Uterus (tissue), 4 donors: ENCODE measurements at regions of chr15 and their contacts with region 1.

Region 1: DNA sequence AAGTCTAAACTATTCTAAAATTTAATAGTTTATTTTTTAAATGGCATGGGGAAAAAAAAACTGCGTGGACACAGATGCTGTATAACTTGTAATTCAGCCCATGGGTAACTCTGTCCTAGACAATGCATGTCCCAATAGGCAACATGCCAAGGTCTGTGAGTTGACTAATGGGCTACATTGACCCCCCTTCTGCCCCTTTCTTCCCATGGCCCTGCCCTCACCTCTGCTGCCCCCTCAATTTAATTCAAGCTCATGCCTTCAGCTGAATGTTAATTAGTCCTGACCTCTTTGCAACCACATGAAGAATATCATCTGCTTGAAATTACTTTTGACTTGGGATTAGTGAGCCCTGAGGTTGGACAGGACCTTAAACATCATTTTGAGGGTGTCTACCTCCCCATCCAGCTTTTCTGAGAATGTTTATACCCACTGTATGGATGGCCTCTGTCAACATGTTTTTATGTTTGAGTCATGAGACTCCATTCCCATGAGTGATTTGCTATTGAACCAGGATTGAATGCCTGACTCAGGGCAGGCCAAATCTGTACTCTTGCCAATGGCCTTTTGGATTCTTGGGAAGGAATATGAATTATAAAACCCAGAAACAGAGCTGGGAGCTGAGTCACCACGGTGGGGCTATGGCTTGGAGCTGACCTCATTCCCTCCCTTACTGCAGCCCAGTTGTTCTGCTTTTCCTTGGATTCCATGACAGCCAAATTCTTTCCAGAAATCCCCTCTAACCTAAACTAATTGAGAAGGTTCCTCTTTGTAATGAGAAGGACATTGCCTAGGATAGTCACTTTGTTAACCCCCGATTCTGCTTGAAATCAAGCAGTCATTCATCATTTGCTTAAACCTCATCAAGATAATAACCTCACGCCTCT is 33.5 kb upstream of the PDE8A start:
- DNase-seq: peak; percentile 45 to 49
- H3K4me3 ChIP-seq: no peak overlapping the region
- H3K27ac ChIP-seq: peak overlapping the region; percentile 21 to 39
- H3K4me1 ChIP-seq: no peaks in the 10 kb centered on the region
- H3K27me3 ChIP-seq: no peaks in the 10 kb centered on the region
- CTCF ChIP-seq: no peak
- POLR2A ChIP-seq: no peak

Region 2: GRCh38 chr15:84859155-84859554 is 89.0 kb before region 1 on chr15:
- intact Hi-C with region 1: loop called (anchors 10 kb)
- DNase-seq: no peak
- H3K4me3 ChIP-seq: no peak overlapping the region
- H3K27ac ChIP-seq: no peak overlapping the region
- H3K4me1 ChIP-seq: no peaks in the 10 kb centered on the region
- H3K27me3 ChIP-seq: no peaks in the 10 kb centered on the region
- CTCF ChIP-seq: no peak
- POLR2A ChIP-seq: no peak

Region 3: DNA sequence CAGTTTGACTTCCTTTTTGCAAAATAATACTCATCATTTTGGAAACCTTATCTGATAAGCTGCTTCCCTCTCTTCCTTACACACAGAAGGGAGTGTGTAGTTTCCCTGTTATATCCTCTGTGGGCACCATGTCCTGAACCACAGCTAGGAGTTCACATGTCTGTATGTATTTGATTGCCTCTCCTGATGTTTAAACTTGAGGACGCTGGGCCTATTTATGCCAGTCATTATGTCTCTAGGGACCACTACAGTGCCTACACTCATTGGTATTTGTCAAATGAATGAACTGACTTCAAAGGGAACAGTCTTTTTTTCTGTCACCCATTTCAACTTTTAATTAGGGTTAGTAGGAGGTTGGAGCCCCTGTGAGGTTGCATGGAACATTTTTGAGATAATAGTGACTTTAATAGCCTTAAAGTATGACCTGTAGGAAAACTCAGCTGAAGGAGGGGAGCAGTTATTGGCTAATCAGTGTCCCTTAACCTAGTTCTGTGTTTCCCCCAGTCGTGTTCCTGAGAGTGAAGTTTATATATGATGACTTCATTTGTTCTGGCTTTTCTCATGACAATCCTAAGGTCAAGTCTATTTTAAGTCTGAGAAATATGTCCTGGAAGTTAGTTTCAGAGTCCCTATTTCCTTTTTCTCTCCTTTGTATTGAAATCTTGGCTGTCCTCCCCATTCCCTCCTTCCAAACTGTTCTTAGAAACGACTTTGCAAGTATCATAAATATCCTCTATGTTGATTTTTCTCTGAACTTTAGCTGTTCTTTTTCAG is 62.4 kb after region 1 on chr15:
- intact Hi-C with region 1: no loop called
- DNase-seq: peak in 1 of 2 donors; percentile 24
- H3K4me3 ChIP-seq: no peak overlapping the region
- H3K27ac ChIP-seq: peak overlapping the region; percentile 61 to 62
- H3K4me1 ChIP-seq: peaks cover 0 to 5% of the 10 kb centered on the region in 2 donors
- H3K27me3 ChIP-seq: no peaks in the 10 kb centered on the region
- CTCF ChIP-seq: peak in 1 of 4 experiments; percentile 9
- POLR2A ChIP-seq: no peak

Region 4: GRCh38 chr15:85063126-85064079 is 115.2 kb after region 1 on chr15:
- intact Hi-C with region 1: no loop called
- DNase-seq: no peak
- H3K4me3 ChIP-seq: no peak overlapping the region
- H3K27ac ChIP-seq: no peak overlapping the region
- H3K4me1 ChIP-seq: no peaks in the 10 kb centered on the region
- H3K27me3 ChIP-seq: no peaks in the 10 kb centered on the region
- CTCF ChIP-seq: no peak
- POLR2A ChIP-seq: no peak